ENCODE measurements at regions of chr16 and their contacts with region 1.

Region 1: DNA sequence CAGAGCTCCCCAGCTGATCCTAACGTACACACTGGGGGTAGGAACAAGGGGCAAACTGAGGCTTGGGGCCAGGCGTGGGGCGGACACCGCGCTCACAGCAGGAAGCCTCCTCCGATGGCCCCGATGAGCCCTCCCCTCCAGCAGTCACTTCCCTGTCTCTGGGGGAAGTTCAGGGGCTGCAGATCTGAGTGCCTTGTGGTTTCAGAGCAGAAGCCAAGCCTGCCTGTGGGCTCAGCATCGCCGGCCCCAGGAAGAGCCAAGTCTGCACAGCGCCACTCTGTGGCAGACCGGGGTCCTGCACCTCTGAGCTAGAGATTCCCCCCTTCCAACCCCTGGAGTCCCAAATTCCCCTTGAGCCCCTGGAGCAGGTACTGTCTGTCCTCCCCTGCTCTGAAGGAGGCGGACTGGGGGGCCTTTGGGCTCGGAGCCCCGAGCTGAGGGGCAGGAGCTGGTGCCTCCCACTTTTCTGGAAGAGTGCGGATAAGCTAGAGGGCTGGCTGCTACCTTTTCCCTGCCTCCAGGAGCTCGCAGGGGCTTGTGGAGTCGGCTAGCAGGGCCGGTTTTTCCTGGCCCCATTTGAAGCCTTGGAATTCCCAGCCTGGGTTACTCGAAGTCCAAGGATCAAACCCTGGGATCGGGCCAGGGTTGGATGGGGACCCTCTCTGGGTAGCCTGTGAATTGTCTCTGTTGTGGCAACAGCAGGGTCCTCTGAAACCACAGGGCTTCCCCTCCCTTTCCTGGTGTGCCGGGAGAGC is 2.9 kb downstream of the GSE1 start:
- DNase-seq: peak; percentile 85
- H3K4me3 Mint-ChIP-seq: no peak overlapping the region
- H3K27ac Mint-ChIP-seq: no peak overlapping the region
- H3K4me1 Mint-ChIP-seq: peaks cover 26% of the 10 kb centered on the region
- H3K27me3 Mint-ChIP-seq: peaks cover 7% of the 10 kb centered on the region

Region 2: DNA sequence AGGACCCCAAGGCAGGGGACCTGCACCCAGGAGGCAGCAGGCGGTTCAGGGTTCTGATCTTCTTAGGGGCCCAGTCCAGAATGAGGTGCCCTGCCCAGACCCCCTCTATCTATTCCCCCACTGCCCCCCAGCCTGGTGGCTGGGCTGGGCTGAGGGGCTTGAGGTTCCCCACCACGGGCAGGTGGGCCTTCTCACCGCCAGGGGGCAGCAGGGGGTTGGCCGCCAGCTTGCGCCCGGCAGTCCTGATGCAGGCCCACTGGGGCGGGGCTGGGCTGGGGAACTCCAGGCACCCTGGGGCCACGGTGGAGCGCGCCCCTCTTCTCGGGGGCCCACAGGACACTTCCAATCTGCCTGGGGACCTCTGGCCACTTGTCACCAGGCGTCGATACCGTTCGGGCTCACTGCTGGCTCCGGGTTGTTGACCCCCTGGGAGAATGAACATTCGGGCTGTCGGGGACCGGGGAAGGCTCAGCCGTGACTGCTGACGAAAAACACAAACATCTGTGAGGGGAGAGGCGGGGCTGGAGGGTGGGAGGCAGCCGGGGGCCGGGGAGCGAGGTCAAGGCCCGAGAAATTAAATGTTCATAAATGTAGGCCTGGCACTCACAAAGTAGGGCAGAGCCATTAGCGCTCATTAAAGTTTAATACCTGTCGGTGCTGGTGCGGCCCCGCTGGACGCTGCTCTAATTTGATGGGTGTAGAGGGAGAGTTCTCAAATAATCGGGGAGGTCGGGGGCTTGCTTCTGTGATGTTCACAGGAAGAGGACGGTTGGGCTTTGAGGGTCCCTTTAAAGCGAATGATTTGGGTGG is 222.2 kb before region 1 on chr16:
- CTCF ChIA-PET with region 1: interaction called, 21 read pairs
- POLR2A ChIA-PET with region 1: no interaction called
- intact Hi-C with region 1: no loop called
- DNase-seq: peak; percentile 69
- H3K4me3 Mint-ChIP-seq: no peak overlapping the region
- H3K27ac Mint-ChIP-seq: no peak overlapping the region
- H3K4me1 Mint-ChIP-seq: no peaks in the 10 kb centered on the region
- H3K27me3 Mint-ChIP-seq: no peaks in the 10 kb centered on the region

Region 3: DNA sequence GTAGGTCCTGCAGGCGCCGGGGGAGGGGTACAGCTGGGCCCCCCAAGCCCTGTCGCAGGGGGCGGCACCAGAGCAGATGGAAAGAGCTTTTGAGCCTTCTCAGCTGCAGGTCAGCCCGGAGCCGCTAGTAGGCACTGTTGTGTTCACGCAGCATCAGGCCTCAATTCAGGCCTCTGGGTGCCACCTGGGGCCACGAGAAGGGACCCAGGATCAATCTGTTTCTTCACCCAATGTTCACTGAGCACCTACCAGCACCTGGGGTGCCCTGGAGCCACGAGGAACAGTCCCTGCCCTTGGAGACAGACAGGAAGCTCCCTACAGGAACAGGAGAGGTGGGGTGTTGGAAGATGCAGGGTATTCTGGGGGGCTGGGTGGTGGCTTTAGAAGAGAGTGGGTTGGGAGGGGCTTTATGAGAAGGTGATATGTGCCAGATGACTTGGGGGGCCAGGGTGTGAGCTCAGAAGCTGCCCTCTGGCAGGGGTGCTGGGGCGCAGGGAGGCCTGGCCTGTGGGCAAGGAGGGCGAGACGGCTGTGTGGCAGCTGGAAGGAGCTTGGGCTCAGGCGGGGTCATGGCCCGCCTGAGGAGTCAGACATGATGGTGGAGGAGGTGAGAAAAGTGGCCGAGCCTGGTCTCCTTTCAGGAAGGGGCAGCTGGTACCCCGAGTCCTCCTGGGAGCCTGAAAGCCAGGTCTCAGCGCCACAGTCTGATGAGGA is 124.8 kb before region 1 on chr16:
- CTCF ChIA-PET with region 1: interaction called, 65 read pairs
- POLR2A ChIA-PET with region 1: interaction called, 3 read pairs
- intact Hi-C with region 1: no loop called
- DNase-seq: peak; percentile 59
- H3K4me3 Mint-ChIP-seq: no peak overlapping the region
- H3K27ac Mint-ChIP-seq: no peak overlapping the region
- H3K4me1 Mint-ChIP-seq: no peaks in the 10 kb centered on the region
- H3K27me3 Mint-ChIP-seq: peaks cover 1% of the 10 kb centered on the region

Region 4: GRCh38 chr16:85564277-85565051 is 51.6 kb before region 1 on chr16:
- CTCF ChIA-PET with region 1: interaction called, 15 read pairs
- POLR2A ChIA-PET with region 1: no interaction called
- intact Hi-C with region 1: no loop called
- DNase-seq: peak; percentile 82
- H3K4me3 Mint-ChIP-seq: no peak overlapping the region
- H3K27ac Mint-ChIP-seq: no peak overlapping the region
- H3K4me1 Mint-ChIP-seq: peaks cover 45% of the 10 kb centered on the region
- H3K27me3 Mint-ChIP-seq: no peaks in the 10 kb centered on the region

Region 5: GRCh38 chr16:85626191-85626981 is 10.4 kb after region 1 on chr16:
- CTCF ChIA-PET with region 1: interaction called, 36 read pairs
- POLR2A ChIA-PET with region 1: no interaction called
- intact Hi-C with region 1: no loop called
- DNase-seq: no peak
- H3K4me3 Mint-ChIP-seq: no peak overlapping the region
- H3K27ac Mint-ChIP-seq: no peak overlapping the region
- H3K4me1 Mint-ChIP-seq: peaks cover 5% of the 10 kb centered on the region
- H3K27me3 Mint-ChIP-seq: no peaks in the 10 kb centered on the region

Region 6: DNA sequence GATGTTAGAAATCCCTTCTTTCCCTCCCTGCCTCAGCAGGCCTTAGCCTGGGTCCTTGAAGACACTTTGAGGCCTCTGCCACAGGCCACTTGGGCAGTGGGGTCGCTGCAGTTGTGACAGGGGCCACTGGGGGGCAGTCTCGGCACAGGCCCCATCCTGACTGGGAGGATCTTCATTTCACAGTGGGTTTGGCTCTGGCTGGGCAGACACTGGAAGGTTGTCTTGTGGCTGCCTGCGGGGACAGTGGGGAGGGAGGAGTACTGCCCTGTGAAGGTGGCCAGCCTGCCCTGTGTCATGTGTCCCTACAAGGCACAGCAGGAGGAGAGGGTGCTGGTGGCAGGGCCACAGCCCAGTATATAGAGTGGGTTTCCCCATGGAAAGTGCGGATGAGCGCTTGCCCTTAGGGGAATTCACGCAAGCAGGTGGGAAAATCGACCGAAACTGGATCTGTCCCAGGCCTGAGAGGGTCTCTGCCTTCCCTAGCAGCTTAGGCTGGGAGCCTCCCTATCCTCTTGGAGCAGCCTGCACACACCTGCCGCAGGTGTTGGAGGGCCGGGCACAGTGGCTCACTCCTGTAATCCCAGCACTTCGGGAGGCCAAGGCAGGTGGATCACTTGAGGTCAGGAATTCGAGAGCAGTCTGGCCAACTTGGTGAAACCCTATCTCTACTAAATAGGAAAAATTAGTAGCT is 43.9 kb after region 1 on chr16:
- CTCF ChIA-PET with region 1: interaction called, 13 read pairs
- POLR2A ChIA-PET with region 1: no interaction called
- intact Hi-C with region 1: no loop called
- DNase-seq: peak; percentile 80
- H3K4me3 Mint-ChIP-seq: no peak overlapping the region
- H3K27ac Mint-ChIP-seq: peak overlapping the region; percentile 23
- H3K4me1 Mint-ChIP-seq: no peaks in the 10 kb centered on the region
- H3K27me3 Mint-ChIP-seq: no peaks in the 10 kb centered on the region

Measured in activated CD4-positive, alpha-beta memory T cell treated with anti-CD3 and anti-CD28 coated beads for 36 hours (primary cell).